ENCODE measurements at regions of chr5 and their contacts with region 1.

Region 1: GRCh38 chr5:142713121-142713706 is 27.3 kb upstream of the FGF1 start:
- DNase-seq: peak; percentile 91 to 95
- H3K4me3 ChIP-seq: peak overlapping the region; percentile 56
- H3K4me3 Mint-ChIP-seq: peak overlapping the region; percentile 73
- H3K27ac Mint-ChIP-seq: no peak overlapping the region
- H3K4me1 ChIP-seq: no peaks in the 10 kb centered on the region; the same call in 1 of the 2 replicates
- H3K4me1 Mint-ChIP-seq: peaks cover 7% of the 10 kb centered on the region
- H3K27me3 ChIP-seq: no peaks in the 10 kb centered on the region
- H3K27me3 Mint-ChIP-seq: no peaks in the 10 kb centered on the region
- CTCF ChIP-seq: peak; percentile 96 to 98

Region 2: DNA sequence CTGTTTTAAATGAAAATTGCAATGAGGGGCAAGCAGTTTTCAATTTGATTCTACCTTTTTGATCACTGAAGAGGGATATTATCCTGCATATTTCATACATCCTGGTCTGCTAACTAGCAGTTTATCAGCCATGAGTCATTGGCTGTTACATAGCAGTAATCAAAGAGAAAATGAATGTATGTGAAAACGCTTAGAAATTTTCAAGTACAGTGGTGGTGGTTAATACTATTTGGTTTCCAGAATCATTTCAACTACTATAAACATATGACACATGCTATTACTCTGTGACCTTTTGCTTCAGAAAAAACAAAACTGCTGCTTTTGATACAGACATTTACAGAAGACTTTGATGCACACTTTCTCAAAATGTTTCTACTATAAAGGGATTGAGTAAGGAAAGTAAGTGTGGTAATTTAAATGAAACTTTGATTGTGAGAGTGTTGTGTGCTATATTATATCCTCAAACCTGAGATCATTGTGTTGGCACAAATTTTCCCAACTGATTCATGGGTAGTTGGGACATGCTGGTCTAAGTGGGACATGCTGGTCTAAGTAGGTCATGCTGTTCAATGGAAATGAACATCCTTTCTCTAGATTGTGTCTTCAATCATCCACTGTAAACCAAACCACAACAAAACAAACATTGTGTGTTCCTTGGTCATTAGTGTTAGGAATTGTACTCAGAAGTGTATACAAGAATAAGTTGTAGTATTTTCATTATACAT is 739.2 kb before region 1 on chr5:
- CTCF ChIA-PET with region 1: no interaction called
- POLR2A ChIA-PET with region 1: no interaction called
- intact Hi-C with region 1: no loop called
- DNase-seq: no peak
- H3K4me3 ChIP-seq: no peak overlapping the region
- H3K4me3 Mint-ChIP-seq: no peak overlapping the region
- H3K27ac Mint-ChIP-seq: no peak overlapping the region
- H3K4me1 ChIP-seq: peaks cover 12% of the 10 kb centered on the region
- H3K4me1 Mint-ChIP-seq: no peaks in the 10 kb centered on the region
- H3K27me3 ChIP-seq: no peaks in the 10 kb centered on the region
- H3K27me3 Mint-ChIP-seq: no peaks in the 10 kb centered on the region
- CTCF ChIP-seq: no peak

Region 3: GRCh38 chr5:142611154-142611553 is 102.1 kb before region 1 on chr5:
- CTCF ChIA-PET with region 1: interaction called, 8 read pairs
- POLR2A ChIA-PET with region 1: no interaction called
- intact Hi-C with region 1: loop called (anchors 1 kb)
- DNase-seq: peak; percentile 73 to 78
- H3K4me3 ChIP-seq: no peak overlapping the region
- H3K4me3 Mint-ChIP-seq: no peak overlapping the region
- H3K27ac Mint-ChIP-seq: no peak overlapping the region
- H3K4me1 ChIP-seq: no peaks in the 10 kb centered on the region
- H3K4me1 Mint-ChIP-seq: no peaks in the 10 kb centered on the region
- H3K27me3 ChIP-seq: no peaks in the 10 kb centered on the region
- H3K27me3 Mint-ChIP-seq: peaks cover 12% of the 10 kb centered on the region
- CTCF ChIP-seq: peak; percentile 85 to 94

Region 4: GRCh38 chr5:142699184-142699720 is 14.0 kb before region 1 on chr5:
- CTCF ChIA-PET with region 1: interaction called, 19 read pairs
- POLR2A ChIA-PET with region 1: no interaction called
- intact Hi-C with region 1: no loop called
- DNase-seq: peak; percentile 84 to 90
- H3K4me3 ChIP-seq: no peak overlapping the region
- H3K4me3 Mint-ChIP-seq: no peak overlapping the region
- H3K27ac Mint-ChIP-seq: no peak overlapping the region
- H3K4me1 ChIP-seq: no peaks in the 10 kb centered on the region
- H3K4me1 Mint-ChIP-seq: no peaks in the 10 kb centered on the region
- H3K27me3 ChIP-seq: no peaks in the 10 kb centered on the region; the same call in none of the 2 replicates
- H3K27me3 Mint-ChIP-seq: peaks cover 7% of the 10 kb centered on the region
- CTCF ChIP-seq: peak; percentile 93 to 97

Region 5: GRCh38 chr5:142769741-142770631 is 56.8 kb after region 1 on chr5 and contains the start of gene ARHGAP26:
- CTCF ChIA-PET with region 1: interaction called, 17 read pairs
- POLR2A ChIA-PET with region 1: interaction called, 3 read pairs
- intact Hi-C with region 1: loop called (anchors 1 kb)
- DNase-seq: peak; percentile 97 to 98
- H3K4me3 ChIP-seq: peak within 1 kb of the TSS; percentile 98
- H3K4me3 Mint-ChIP-seq: peak within 1 kb of the TSS; percentile 99
- H3K27ac Mint-ChIP-seq: peak within 1 kb of the TSS; percentile 79
- H3K4me1 ChIP-seq: no peaks in the 10 kb centered on the region
- H3K4me1 Mint-ChIP-seq: peaks cover 15% of the 10 kb centered on the region
- H3K27me3 ChIP-seq: no peaks in the 10 kb centered on the region
- H3K27me3 Mint-ChIP-seq: no peaks in the 10 kb centered on the region
- CTCF ChIP-seq: peak in 1 of 2 experiments; percentile 38
- total RNA-seq, gene ARHGAP26: 74.6 and 79.8 TPM in 2 replicates

Region 6: GRCh38 chr5:142888469-142889085 is 175.4 kb after region 1 on chr5:
- CTCF ChIA-PET with region 1: interaction called, 37 read pairs
- POLR2A ChIA-PET with region 1: no interaction called
- intact Hi-C with region 1: loop called (anchors 1 kb)
- DNase-seq: peak; percentile 54 to 59
- H3K4me3 ChIP-seq: no peak overlapping the region
- H3K4me3 Mint-ChIP-seq: no peak overlapping the region
- H3K27ac Mint-ChIP-seq: no peak overlapping the region
- H3K4me1 ChIP-seq: peaks cover 17% of the 10 kb centered on the region
- H3K4me1 Mint-ChIP-seq: peaks cover 7% of the 10 kb centered on the region
- H3K27me3 ChIP-seq: no peaks in the 10 kb centered on the region
- H3K27me3 Mint-ChIP-seq: no peaks in the 10 kb centered on the region
- CTCF ChIP-seq: peak; percentile 68 to 69

Region 7: GRCh38 chr5:143403593-143404415 is 690.6 kb after region 1 on chr5 and contains the start of gene NR3C1:
- CTCF ChIA-PET with region 1: no interaction called
- POLR2A ChIA-PET with region 1: no interaction called
- intact Hi-C with region 1: loop called (anchors 10 kb)
- DNase-seq: peak; percentile 57 to 78
- H3K4me3 ChIP-seq: peak within 1 kb of the TSS; percentile 90
- H3K4me3 Mint-ChIP-seq: peak within 1 kb of the TSS; percentile 77
- H3K27ac Mint-ChIP-seq: peak within 1 kb of the TSS; percentile 15
- H3K4me1 ChIP-seq: no peaks in the 10 kb centered on the region
- H3K4me1 Mint-ChIP-seq: peaks cover 13% of the 10 kb centered on the region
- H3K27me3 ChIP-seq: no peaks in the 10 kb centered on the region; the same call in 1 of the 2 replicates
- H3K27me3 Mint-ChIP-seq: no peaks in the 10 kb centered on the region
- CTCF ChIP-seq: peak; percentile 36 to 57
- total RNA-seq, gene NR3C1: 15.4 and 17.5 TPM in 2 replicates

Region 8: DNA sequence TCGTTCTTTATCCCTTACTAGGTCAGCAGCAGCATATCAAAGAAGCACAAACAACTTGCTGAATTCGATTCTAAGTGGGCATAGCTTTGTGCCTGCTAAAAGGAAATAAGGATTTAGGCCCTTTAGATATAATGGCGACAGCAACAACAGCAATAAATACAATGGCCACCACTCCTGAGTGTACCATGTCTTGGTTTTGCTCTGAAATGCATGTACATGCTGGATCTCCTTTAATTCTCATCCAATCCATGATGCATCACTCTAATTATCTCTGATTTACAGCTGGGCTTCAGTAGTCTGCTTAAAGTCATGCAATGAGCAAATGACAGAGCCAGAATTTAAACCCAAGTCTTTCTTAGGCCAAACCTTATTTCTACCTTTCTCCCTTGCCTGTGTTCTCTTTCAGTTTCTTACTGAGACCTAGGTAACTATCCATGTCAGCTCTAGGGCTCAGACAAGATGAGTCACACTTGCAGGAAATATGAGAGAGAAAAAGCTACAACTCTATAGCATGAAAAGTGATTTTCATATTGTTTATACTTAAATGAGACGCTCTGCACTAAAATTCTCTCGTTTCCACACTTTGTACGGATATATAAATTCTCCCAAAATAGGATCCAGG is 1210.5 kb after region 1 on chr5:
- CTCF ChIA-PET with region 1: no interaction called
- POLR2A ChIA-PET with region 1: no interaction called
- intact Hi-C with region 1: no loop called
- DNase-seq: no peak
- H3K4me3 ChIP-seq: no peak overlapping the region
- H3K4me3 Mint-ChIP-seq: no peak overlapping the region
- H3K27ac Mint-ChIP-seq: no peak overlapping the region
- H3K4me1 ChIP-seq: no peaks in the 10 kb centered on the region
- H3K4me1 Mint-ChIP-seq: no peaks in the 10 kb centered on the region
- H3K27me3 ChIP-seq: no peaks in the 10 kb centered on the region
- H3K27me3 Mint-ChIP-seq: peaks cover 4% of the 10 kb centered on the region
- CTCF ChIP-seq: no peak

Measured in Caco-2 (cell line).